ENCODE measurements at regions of chr6 and their contacts with region 1.

Region 1: GRCh38 chr6:42417641-42418112 is 34.0 kb downstream of the TRERF1 start:
- DNase-seq: no peak
- ATAC-seq: no peak
- H3K4me3 Mint-ChIP-seq: no peak overlapping the region
- H3K27ac Mint-ChIP-seq: no peak overlapping the region
- H3K4me1 Mint-ChIP-seq: peaks cover 63% of the 10 kb centered on the region
- H3K27me3 Mint-ChIP-seq: no peaks in the 10 kb centered on the region
- CTCF ChIP-seq: no peak

Region 2: GRCh38 chr6:42374018-42374659 is 43.5 kb before region 1 on chr6:
- CTCF ChIA-PET with region 1: no interaction called
- POLR2A ChIA-PET with region 1: no interaction called
- DNase-seq: no peak
- ATAC-seq: no peak
- H3K4me3 Mint-ChIP-seq: no peak overlapping the region
- H3K27ac Mint-ChIP-seq: no peak overlapping the region
- H3K4me1 Mint-ChIP-seq: peaks cover 17% of the 10 kb centered on the region
- H3K27me3 Mint-ChIP-seq: no peaks in the 10 kb centered on the region
- CTCF ChIP-seq: no peak

Region 3: DNA sequence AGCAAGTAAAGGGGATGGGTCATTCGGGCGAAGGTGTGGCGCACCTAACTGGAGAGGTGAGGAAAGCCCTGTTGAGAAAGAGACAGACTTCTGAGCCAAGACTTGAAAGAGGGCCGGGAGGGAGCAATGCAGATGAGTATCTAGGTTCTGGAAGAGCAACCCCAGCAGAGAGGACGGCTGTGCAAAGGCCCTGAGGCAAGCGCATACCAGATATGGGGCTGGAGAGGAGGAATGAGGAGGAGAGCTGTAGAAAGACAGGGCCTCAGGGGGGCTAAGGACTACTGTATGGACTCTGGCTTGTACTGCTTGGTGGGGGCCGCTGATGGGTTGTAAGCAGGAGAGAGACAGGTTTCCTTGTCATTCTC is 12.2 kb after region 1 on chr6:
- CTCF ChIA-PET with region 1: interaction called, 21 read pairs
- POLR2A ChIA-PET with region 1: no interaction called
- DNase-seq: no peak
- ATAC-seq: no peak
- H3K4me3 Mint-ChIP-seq: no peak overlapping the region
- H3K27ac Mint-ChIP-seq: no peak overlapping the region
- H3K4me1 Mint-ChIP-seq: peaks cover 49% of the 10 kb centered on the region
- H3K27me3 Mint-ChIP-seq: no peaks in the 10 kb centered on the region
- CTCF ChIP-seq: no peak

Measured in WTC11 (cell line).